ENCODE measurements at regions of chr12 and their contacts with region 1.

Region 1: GRCh38 chr12:6278439-6279255 is 31.8 kb upstream of the PLEKHG6 start:
- DNase-seq: peak; percentile 87 to 99
- H3K4me3 ChIP-seq: peak overlapping the region; percentile 70
- H3K27ac ChIP-seq: peak overlapping the region; percentile 97
- H3K4me1 ChIP-seq: peaks cover 78% of the 10 kb centered on the region
- H3K27me3 ChIP-seq: no peaks in the 10 kb centered on the region
- CTCF ChIP-seq: peak; percentile 69

Region 2: GRCh38 chr12:5556039-5556614 is 722.5 kb before region 1 on chr12:
- CTCF ChIA-PET with region 1: no interaction called
- POLR2A ChIA-PET with region 1: no interaction called
- intact Hi-C with region 1: no loop called
- DNase-seq: peak in 1 of 2 experiments; percentile 8
- H3K4me3 ChIP-seq: no peak overlapping the region
- H3K27ac ChIP-seq: no peak overlapping the region
- H3K4me1 ChIP-seq: no peaks in the 10 kb centered on the region
- H3K27me3 ChIP-seq: peaks cover 31% of the 10 kb centered on the region
- CTCF ChIP-seq: peak; percentile 63

Region 3: DNA sequence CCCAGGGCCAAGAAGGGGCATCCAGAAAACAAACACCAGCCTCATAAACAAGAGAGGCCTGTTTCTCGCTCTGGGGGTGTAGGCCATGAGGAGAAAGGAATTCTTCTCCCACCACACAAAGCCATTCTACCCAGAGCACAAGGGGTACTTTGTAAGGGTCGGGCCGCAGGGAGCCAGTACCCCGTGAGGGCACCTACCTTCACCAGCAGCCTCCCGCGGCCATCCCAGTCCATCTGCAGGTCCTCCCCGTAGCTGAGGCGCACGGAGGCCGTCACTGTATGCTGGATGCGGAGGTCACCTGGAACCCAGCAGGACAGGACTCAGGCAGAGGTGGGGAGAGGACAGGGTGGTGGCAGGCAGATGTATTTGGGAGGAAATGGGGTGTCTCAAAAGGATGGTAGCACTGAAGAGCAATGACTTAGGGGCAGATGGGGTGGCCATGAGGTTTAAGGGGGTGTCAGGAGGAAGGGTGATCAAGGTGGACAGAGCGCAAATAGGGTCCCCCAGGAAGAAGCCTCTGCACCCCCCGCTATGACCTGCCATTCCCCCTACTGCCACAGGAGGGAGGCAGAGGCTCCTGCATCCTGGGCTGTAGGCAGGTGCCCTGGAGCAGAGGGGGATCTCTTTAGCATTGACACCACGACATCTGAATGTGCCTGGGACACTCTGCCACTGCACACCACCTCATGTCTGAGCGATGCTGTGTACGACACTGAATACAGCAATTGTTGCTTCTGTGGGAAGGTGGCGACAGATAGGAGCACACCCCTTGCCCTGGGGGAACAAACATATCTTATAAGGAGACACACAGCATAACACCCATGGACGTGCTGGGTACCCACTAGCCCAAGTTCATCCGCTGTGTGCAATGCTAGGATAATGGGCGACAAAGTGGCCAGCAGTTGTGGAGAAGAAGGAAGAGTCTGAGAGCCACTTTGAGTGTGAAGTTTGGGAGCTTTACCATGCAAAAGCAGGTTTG is 215.6 kb before region 1 on chr12:
- CTCF ChIA-PET with region 1: interaction called, 12 read pairs
- POLR2A ChIA-PET with region 1: interaction called, 7 read pairs
- intact Hi-C with region 1: loop called (anchors 1 kb)
- DNase-seq: peak; percentile 48 to 80
- H3K4me3 ChIP-seq: no peak overlapping the region
- H3K27ac ChIP-seq: no peak overlapping the region
- H3K4me1 ChIP-seq: peaks cover 34% of the 10 kb centered on the region
- H3K27me3 ChIP-seq: no peaks in the 10 kb centered on the region
- CTCF ChIP-seq: peak; percentile 98

Region 4: DNA sequence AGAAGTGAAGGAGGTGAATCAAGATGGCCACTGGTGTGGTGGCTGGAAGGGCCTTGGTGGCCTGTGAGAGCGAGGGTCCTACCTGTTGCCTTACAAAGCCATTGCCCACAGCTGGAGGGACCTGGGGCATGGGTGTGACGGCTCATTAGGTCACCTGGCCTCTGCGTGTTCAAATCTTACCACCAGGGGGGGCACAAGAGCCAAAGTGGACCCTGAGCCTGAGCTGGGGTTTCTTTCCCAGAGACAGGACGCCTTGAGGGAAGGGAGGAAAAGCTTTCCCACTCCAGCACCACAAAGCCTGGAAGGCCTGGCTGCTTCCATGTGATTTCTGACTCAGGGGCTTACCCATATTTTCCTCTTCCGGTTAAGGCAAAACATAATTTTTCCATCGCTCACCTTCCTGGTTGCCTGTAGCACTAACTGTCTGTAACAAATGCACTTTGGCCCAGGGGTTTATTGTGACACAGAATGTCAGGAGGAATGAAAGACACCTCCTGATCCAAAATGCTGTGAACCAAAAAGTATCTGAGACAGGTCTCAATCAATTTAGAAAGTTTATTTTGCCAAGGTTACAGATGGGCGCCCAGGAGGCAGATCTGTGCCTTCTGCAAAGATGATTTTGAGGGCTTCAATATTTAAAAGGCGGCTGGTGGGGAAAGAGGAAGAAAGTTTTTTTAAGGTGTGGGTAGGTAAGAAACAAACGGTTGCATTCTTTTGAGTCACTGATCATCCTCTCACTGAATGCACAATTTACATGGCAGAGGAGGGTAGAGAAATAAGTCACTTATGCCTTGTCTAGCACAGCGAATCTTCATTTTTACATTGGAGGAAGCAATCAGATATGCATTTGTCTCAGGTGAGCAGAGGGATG is 82.7 kb before region 1 on chr12:
- CTCF ChIA-PET with region 1: interaction called, 24 read pairs
- POLR2A ChIA-PET with region 1: interaction called, 25 read pairs
- intact Hi-C with region 1: loop called (anchors 1 kb)
- DNase-seq: peak; percentile 91 to 96
- H3K4me3 ChIP-seq: no peak overlapping the region
- H3K27ac ChIP-seq: peak overlapping the region; percentile 86
- H3K4me1 ChIP-seq: peaks cover 43% of the 10 kb centered on the region
- H3K27me3 ChIP-seq: no peaks in the 10 kb centered on the region
- CTCF ChIP-seq: peak; percentile 96

Region 5: DNA sequence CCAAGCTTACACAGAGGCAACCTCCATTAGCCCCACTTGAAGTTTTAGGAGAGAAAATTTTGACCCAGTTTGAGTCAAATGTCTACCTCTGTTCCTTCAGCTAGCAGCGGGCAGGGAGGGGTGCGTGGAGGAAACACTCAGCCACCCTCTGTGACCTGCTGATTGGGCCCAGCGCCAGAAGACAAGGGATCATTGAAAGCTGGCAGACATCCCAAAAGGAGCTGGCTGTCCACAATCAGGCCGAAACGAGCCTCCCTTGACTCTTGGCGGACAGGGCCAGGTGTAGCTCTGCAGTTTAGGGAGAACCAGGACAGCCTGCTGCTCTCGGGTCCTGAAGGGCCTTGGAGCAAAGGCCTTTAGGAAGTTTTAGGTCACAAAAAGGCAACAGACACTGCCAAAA is 37.2 kb before region 1 on chr12:
- CTCF ChIA-PET with region 1: interaction called, 13 read pairs
- POLR2A ChIA-PET with region 1: interaction called, 11 read pairs
- intact Hi-C with region 1: no loop called
- DNase-seq: peak in 1 of 2 experiments; percentile 62
- H3K4me3 ChIP-seq: no peak overlapping the region
- H3K27ac ChIP-seq: no peak overlapping the region
- H3K4me1 ChIP-seq: peaks cover 10% of the 10 kb centered on the region; the same call in 1 of the 2 replicates
- H3K27me3 ChIP-seq: no peaks in the 10 kb centered on the region
- CTCF ChIP-seq: no peak

Region 6: GRCh38 chr12:6335451-6336078 is 56.9 kb after region 1 on chr12:
- CTCF ChIA-PET with region 1: interaction called, 10 read pairs
- POLR2A ChIA-PET with region 1: interaction called, 6 read pairs
- intact Hi-C with region 1: no loop called
- DNase-seq: peak; percentile 76
- H3K4me3 ChIP-seq: peak overlapping the region; percentile 49
- H3K27ac ChIP-seq: peak overlapping the region; percentile 95
- H3K4me1 ChIP-seq: peaks cover 82% of the 10 kb centered on the region
- H3K27me3 ChIP-seq: no peaks in the 10 kb centered on the region
- CTCF ChIP-seq: peak; percentile 53; the same call in 1 of the 2 replicates

Region 7: GRCh38 chr12:6461401-6462233 is 183.0 kb after region 1 on chr12:
- CTCF ChIA-PET with region 1: interaction called, 16 read pairs
- POLR2A ChIA-PET with region 1: no interaction called
- intact Hi-C with region 1: no loop called
- DNase-seq: no peak
- H3K4me3 ChIP-seq: no peak overlapping the region
- H3K27ac ChIP-seq: no peak overlapping the region
- H3K4me1 ChIP-seq: no peaks in the 10 kb centered on the region
- H3K27me3 ChIP-seq: no peaks in the 10 kb centered on the region
- CTCF ChIP-seq: no peak